ENCODE measurements at regions of chrX and their contacts with region 1.

Region 1: GRCh38 chrX:70433848-70434351 is 10.7 kb upstream of the DLG3 start:
- DNase-seq: peak; percentile 92
- H3K4me3 Mint-ChIP-seq: peak overlapping the region; percentile 93
- H3K27ac Mint-ChIP-seq: peak overlapping the region; percentile 95
- H3K4me1 Mint-ChIP-seq: peaks cover 30% of the 10 kb centered on the region
- H3K27me3 Mint-ChIP-seq: peaks cover 6% of the 10 kb centered on the region

Region 2: GRCh38 chrX:70196961-70197805 is 236.7 kb before region 1 on chrX:
- intact Hi-C with region 1: loop called (anchors 2 kb)
- DNase-seq: peak; percentile 88
- H3K4me3 Mint-ChIP-seq: no peak overlapping the region
- H3K27ac Mint-ChIP-seq: no peak overlapping the region
- H3K4me1 Mint-ChIP-seq: peaks cover 4% of the 10 kb centered on the region
- H3K27me3 Mint-ChIP-seq: peaks cover 12% of the 10 kb centered on the region

Region 3: DNA sequence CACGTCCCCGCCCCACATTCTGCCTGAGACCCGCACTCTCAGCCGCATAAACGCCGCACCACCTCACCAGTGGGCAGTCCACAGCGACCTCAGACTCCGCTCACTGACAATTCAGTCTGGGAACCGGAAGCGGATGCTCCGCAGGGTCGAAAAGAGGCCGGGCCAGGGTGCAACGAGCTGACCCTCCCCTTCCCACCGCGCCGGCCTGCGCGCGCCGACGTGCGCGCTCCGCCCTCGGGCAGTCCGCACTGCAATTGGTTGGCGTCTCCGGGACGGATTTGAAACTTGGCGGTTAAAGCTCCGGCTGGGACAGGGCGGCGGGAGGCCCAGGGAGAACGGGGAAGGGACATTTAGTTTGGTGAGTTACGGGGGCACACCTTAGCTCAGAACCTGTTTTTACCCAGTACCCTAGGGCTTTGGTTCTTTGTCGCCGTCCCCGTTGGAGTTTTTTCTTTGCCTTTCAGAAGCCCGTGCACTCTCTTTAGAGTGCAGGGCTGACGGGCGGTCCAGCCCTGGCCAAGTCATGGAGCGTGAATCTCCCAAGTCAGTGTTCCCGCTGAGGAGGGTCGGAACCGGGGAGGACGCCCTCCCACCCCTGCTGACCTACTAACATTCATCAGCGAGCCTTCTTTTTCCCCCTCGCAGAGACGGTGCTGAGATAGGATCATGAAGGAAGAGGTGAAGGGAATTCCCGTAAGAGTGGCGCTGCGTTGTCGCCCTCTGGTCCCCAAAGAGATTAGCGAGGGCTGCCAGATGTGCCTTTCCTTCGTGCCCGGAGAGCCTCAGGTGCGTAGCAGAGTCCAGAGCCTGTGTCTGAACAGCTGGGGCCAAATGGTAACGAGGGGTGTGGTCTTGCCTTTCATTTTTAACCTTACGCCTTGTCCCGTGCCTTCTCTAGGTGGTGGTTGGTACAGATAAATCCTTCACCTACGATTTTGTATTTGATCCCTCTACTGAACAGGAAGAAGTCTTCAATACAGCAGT is 143.8 kb before region 1 on chrX and contains the starts of genes KIF4A and PDZD11:
- intact Hi-C with region 1: loop called (anchors 5 kb)
- DNase-seq: peak; percentile 96
- H3K4me3 Mint-ChIP-seq: peak within 1 kb of the TSS; percentile 94
- H3K27ac Mint-ChIP-seq: peak within 1 kb of the TSS; percentile 87
- H3K4me1 Mint-ChIP-seq: peaks cover 22% of the 10 kb centered on the region
- H3K27me3 Mint-ChIP-seq: no peaks in the 10 kb centered on the region
- total RNA-seq, gene KIF4A: 19.4 and 19.8 TPM in 2 replicates
- total RNA-seq, gene PDZD11: 28.9 and 30.0 TPM in 2 replicates

Region 4: GRCh38 chrX:70336767-70337166 is 97.1 kb before region 1 on chrX:
- intact Hi-C with region 1: loop called (anchors 5 kb)
- DNase-seq: peak; percentile 58
- H3K4me3 Mint-ChIP-seq: no peak overlapping the region
- H3K27ac Mint-ChIP-seq: peak overlapping the region; percentile 45
- H3K4me1 Mint-ChIP-seq: peaks cover 15% of the 10 kb centered on the region
- H3K27me3 Mint-ChIP-seq: no peaks in the 10 kb centered on the region

Region 5: GRCh38 chrX:70970482-70970995 is 536.6 kb after region 1 on chrX:
- intact Hi-C with region 1: loop called (anchors 10 kb)
- DNase-seq: peak; percentile 49
- H3K4me3 Mint-ChIP-seq: peak overlapping the region; percentile 17
- H3K27ac Mint-ChIP-seq: no peak overlapping the region
- H3K4me1 Mint-ChIP-seq: no peaks in the 10 kb centered on the region
- H3K27me3 Mint-ChIP-seq: peaks cover 2% of the 10 kb centered on the region

Region 6: DNA sequence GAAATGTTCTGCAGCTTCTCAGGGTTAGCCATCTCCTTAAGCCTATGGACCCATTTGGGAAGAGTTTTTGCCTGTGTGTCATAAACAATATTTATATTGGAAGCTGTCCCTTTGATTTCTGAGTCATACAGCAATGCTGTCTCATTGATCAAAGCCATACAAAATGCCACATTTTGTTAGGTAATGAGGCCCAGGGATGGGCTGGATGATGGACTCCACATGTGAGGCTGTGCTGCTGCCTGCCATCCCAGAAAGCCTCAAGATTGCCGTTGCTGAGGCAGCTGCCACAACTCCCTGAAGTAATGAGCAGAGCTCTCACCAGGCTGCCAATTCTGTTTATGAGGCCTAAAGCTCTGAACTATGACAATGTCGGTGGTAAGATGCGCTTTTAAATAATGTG is 776.9 kb after region 1 on chrX:
- intact Hi-C with region 1: no loop called
- DNase-seq: no peak
- H3K4me3 Mint-ChIP-seq: no peak overlapping the region
- H3K27ac Mint-ChIP-seq: no peak overlapping the region
- H3K4me1 Mint-ChIP-seq: no peaks in the 10 kb centered on the region
- H3K27me3 Mint-ChIP-seq: peaks cover 14% of the 10 kb centered on the region

Measured in activated CD4-positive, alpha-beta T cell treated with anti-CD3 and anti-CD28 coated beads, Interleukin-2, amount 10 ng/mL, durations not matched to agents 24 days and 14 days (primary cell).